ENCODE measurements at regions of chr11 and their contacts with region 1.

Region 1: GRCh38 chr11:925496-926321 is at the start of gene AP2A2:
- DNase-seq: peak; percentile 96
- H3K4me3 ChIP-seq: peak within 1 kb of the TSS; percentile 76
- H3K27ac ChIP-seq: peak within 1 kb of the TSS; percentile 34
- H3K4me1 ChIP-seq: peaks cover 18% of the 10 kb centered on the region
- CTCF ChIP-seq: peak; percentile 68
- total RNA-seq, gene AP2A2: 22.4 and 24.9 TPM in 2 replicates

Region 2: GRCh38 chr11:876519-876918 is 49.2 kb before region 1 on chr11:
- CTCF ChIA-PET with region 1: no interaction called
- POLR2A ChIA-PET with region 1: no interaction called
- intact Hi-C with region 1: no loop called
- DNase-seq: no peak
- H3K4me3 ChIP-seq: no peak overlapping the region
- H3K27ac ChIP-seq: no peak overlapping the region
- H3K4me1 ChIP-seq: no peaks in the 10 kb centered on the region
- CTCF ChIP-seq: no peak

Region 3: DNA sequence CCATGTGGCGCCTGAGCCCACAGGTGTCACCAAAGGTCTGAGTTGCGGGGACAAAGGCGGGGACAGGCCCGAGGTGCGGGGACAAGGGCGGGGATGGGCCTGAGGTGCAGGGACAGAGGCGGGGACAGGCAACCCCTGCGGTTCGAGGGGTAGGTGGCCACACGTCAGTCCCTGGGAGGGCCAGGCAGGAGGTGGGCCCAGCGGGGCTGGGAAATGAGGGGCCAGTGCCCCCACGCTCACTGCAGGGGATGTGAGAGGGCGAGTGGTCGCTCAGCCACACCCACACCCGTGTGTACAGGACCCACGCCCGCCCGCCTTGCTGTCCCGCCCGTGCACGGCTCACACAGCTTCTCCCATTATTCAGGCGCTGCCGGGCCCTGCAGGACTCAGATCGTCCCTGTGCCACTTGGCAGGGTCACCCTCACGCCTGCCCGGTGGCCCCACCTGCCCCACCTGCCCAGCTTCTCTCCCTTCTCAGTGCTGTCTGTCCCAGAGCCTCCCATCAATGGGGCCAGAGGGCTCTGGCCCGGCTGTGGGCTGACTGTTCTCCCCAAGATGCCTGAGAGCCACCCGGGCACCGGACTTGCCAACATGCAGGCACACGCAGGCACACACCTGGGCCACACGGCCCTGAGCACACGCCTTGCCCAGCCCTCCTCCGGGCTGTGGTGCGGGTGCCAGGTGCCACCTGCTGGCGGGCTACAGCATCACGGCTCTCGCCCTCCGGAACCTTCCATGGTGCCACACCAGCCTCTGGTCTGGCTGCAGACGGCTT is 125.1 kb after region 1 on chr11:
- CTCF ChIA-PET with region 1: no interaction called
- POLR2A ChIA-PET with region 1: no interaction called
- intact Hi-C with region 1: loop called (anchors 1 kb)
- DNase-seq: peak; percentile 79
- H3K4me3 ChIP-seq: no peak overlapping the region
- H3K27ac ChIP-seq: no peak overlapping the region
- H3K4me1 ChIP-seq: no peaks in the 10 kb centered on the region
- CTCF ChIP-seq: peak; percentile 87